ENCODE measurements at regions of chr11 and their contacts with region 1.

Region 1: DNA sequence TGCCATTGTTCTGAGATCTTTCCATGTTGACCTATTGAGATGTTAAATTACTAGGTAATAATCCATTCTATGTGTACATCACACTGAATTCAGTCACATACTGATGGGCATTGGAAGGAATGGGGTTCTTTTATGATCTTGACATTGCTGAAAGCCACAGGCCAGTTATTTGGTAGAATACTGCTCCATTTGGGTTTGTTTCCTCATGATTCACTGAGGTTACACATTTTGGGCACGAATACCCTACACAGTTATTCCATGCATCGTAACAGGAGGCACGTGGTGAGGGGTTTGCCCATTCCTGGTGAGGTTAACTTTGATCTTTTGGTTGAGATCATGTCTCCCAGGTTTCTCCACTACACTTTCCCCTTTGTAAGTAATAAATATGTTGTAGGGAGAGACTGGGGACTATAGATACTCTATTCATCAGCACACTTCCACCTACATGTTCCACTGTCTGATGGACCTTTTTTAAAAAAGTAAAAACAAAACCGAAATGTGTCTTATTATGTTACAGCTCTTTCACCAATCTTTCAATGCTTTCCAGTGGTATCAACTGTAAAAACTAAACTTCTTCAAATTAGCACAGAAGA is 12.0 kb upstream of the FOLR1 start:
- DNase-seq: no peak
- H3K4me3 Mint-ChIP-seq: no peak overlapping the region
- H3K27ac Mint-ChIP-seq: peak overlapping the region; percentile 44
- H3K4me1 Mint-ChIP-seq: peaks cover 22% of the 10 kb centered on the region
- H3K27me3 Mint-ChIP-seq: no peaks in the 10 kb centered on the region
- CTCF ChIP-seq: no peak

Region 2: DNA sequence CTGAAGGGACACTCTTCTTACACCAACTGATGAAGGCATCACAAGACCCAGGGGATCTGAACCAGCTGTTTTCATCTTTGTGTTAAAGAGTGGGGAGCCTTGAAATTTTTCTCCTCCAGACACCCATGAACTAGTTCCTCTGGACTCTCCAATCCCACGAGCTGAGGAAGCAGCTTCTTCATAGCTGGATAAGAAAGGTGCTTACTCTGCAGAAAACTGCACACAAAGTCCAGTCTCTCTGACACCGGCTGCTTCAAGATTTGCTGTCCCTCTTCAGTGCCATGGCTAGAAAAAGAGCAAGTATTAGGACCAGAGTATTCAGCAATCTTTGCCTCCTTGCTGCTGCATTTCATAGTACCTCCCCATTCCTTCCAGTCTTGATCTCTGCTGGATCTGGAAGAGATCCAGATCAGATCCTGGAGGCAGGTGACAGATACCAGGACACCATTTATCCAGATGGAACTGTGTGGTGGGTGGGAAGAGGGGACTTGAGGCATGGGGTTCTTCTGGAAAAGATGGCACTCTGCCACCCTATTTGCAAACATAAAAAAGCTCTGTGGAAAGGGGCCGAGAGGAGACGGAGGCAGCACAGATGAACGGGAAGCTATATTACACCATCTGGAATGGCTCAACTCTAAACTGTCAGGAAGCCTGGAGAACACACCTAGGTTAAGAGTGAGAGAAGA is 155.7 kb before region 1 on chr11:
- CTCF ChIA-PET with region 1: interaction called, 48 read pairs
- POLR2A ChIA-PET with region 1: interaction called, 14 read pairs
- intact Hi-C with region 1: loop called (anchors 1 kb)
- DNase-seq: no peak
- H3K4me3 Mint-ChIP-seq: no peak overlapping the region
- H3K27ac Mint-ChIP-seq: peak overlapping the region; percentile 19
- H3K4me1 Mint-ChIP-seq: peaks cover 4% of the 10 kb centered on the region
- H3K27me3 Mint-ChIP-seq: no peaks in the 10 kb centered on the region
- CTCF ChIP-seq: no peak

Region 3: DNA sequence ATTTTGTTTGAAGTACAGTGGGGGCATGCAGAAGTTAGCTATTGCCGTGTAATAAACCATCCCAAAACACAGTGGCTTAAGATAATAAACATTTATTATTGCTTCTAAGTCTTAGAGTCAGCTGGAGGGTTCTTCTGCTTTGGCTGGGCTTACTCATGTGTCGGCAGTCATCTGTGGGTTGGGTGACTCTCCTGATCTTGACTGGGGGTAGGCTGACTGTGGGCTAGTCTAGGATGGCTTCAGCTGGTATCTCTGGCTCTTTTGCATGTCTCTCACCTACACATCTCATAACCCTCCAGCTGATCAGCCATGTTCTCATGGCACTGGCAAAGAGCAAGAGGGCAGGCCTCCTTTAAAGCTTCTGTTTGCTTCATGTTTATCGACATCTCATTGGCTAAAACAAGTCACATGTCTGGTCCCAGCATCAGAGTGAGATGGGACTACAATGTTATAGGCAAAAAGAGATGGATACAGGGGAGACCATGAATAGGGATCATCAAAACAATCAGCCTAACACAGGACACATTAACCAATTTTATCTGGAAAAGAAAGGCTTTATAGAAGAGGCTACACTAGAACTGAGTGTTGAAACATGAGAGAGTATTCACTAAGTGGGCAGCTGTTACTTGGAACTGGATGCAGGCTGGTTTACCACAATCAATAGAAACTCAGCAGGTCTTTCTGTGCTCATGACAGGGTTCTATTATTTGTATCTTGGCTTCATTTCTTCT is 94.1 kb before region 1 on chr11:
- CTCF ChIA-PET with region 1: interaction called, 58 read pairs
- POLR2A ChIA-PET with region 1: interaction called, 8 read pairs
- intact Hi-C with region 1: no loop called
- DNase-seq: no peak
- H3K4me3 Mint-ChIP-seq: no peak overlapping the region
- H3K27ac Mint-ChIP-seq: no peak overlapping the region
- H3K4me1 Mint-ChIP-seq: peaks cover 23% of the 10 kb centered on the region
- H3K27me3 Mint-ChIP-seq: no peaks in the 10 kb centered on the region
- CTCF ChIP-seq: no peak

Region 4: GRCh38 chr11:72112321-72113219 is 67.3 kb before region 1 on chr11 and contains the start of gene ANAPC15:
- CTCF ChIA-PET with region 1: interaction called, 25 read pairs
- POLR2A ChIA-PET with region 1: interaction called, 35 read pairs
- intact Hi-C with region 1: no loop called
- DNase-seq: peak; percentile 100
- H3K4me3 Mint-ChIP-seq: peak within 1 kb of the TSS; percentile 98
- H3K27ac Mint-ChIP-seq: peak within 1 kb of the TSS; percentile 100
- H3K4me1 Mint-ChIP-seq: peaks cover 20% of the 10 kb centered on the region
- H3K27me3 Mint-ChIP-seq: no peaks in the 10 kb centered on the region
- CTCF ChIP-seq: no peak
- total RNA-seq, gene ANAPC15: 52.2 and 63.6 TPM in 2 replicates

Region 5: GRCh38 chr11:72217841-72218240 is 37.9 kb after region 1 on chr11:
- CTCF ChIA-PET with region 1: interaction called, 11 read pairs
- POLR2A ChIA-PET with region 1: interaction called, 14 read pairs
- intact Hi-C with region 1: no loop called
- DNase-seq: no peak
- H3K4me3 Mint-ChIP-seq: no peak overlapping the region
- H3K27ac Mint-ChIP-seq: no peak overlapping the region
- H3K4me1 Mint-ChIP-seq: no peaks in the 10 kb centered on the region
- H3K27me3 Mint-ChIP-seq: peaks cover 49% of the 10 kb centered on the region
- CTCF ChIP-seq: no peak

Region 6: DNA sequence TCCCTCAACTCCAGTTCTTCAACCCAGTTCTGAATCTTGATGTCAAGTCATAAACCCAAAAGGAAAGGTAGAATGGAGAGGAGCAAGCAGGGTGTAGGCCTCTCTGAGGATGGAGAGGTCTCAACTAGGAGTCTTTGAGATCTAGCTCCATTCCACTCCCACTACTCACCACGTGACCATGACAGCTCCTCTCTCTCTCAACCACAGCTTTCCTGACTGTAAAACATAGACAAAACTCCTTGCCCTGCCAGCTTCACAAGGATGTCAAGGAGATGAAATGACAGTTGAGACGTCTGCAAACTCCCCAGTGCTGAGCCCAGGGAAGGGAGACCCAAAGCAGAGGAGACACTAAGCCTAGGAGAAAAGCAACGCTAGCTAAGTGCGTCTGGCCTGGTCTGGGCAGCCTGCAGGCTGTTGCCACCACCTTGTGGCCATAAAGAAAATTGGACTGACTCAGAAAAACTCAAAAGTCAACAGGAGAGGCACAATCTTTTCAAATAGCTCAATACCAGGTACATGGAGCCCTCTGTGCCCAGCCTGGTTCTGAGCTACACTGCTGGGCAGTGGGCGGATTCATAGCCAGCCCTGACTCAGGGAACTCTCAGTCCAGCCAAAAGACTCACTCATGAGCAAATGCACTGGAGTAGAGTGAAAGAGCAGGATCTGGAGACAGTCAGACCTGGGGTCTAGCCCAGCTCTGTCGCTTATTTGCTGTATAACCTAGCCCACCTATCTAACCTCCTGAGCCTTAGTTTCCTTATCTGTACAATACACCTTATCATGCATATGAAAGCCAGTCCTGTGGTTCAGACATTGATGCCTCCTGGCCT is 251.1 kb after region 1 on chr11:
- CTCF ChIA-PET with region 1: interaction called, 13 read pairs
- POLR2A ChIA-PET with region 1: no interaction called
- intact Hi-C with region 1: loop called (anchors 1 kb)
- DNase-seq: peak; percentile 51
- H3K4me3 Mint-ChIP-seq: no peak overlapping the region
- H3K27ac Mint-ChIP-seq: no peak overlapping the region
- H3K4me1 Mint-ChIP-seq: peaks cover 28% of the 10 kb centered on the region
- H3K27me3 Mint-ChIP-seq: no peaks in the 10 kb centered on the region
- CTCF ChIP-seq: peak; percentile 81

Measured in MCF 10A (cell line).